ENCODE measurements at regions of chr1 and their contacts with region 1.

Region 1: DNA sequence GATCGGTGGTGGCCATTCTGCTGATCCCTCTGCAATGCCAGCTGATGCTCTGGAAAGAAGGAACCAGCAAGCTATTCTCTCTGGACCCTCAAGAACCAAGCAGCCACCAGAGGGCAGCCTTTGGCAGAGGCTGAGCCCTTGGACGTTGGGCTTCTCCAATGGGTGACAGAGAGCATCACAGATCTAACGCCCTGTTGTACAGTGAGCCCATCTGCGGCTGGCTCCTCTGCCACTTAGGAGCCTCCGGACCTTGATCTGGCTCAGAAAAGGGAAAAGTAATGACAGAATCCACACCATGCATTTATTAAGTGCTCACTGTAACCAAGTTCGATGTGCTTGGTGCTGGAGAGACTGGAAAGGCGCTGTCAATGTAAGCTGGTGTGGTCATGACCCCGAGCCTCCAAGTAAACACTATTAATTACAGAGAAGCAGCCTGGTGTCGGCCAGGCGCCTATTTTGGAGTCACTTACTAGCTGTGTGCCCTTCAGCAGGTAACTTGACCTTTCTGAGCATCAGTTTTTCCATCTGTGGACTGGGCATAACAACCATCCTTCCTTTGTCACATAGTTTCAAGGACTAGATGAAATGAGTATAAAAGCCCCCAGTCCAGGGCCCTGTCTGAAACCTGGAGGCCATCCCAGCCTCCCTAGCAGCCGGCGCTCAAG is 34.9 kb downstream of the ECE1 start:
- DNase-seq: peak; percentile 55 to 85
- ATAC-seq: peak; percentile 92 to 96
- H3K4me3 ChIP-seq: no peak overlapping the region
- H3K27ac ChIP-seq: peak overlapping the region; percentile 44 to 56; a peak in 5 of 6 replicates
- H3K4me1 ChIP-seq: peaks cover 29% of the 10 kb centered on the region
- CTCF ChIP-seq: peak; percentile 74
- EP300 ChIP-seq: no peak
- POLR2A ChIP-seq: no peak
- RAD21 ChIP-seq: peak; percentile 91 to 96

Region 2: DNA sequence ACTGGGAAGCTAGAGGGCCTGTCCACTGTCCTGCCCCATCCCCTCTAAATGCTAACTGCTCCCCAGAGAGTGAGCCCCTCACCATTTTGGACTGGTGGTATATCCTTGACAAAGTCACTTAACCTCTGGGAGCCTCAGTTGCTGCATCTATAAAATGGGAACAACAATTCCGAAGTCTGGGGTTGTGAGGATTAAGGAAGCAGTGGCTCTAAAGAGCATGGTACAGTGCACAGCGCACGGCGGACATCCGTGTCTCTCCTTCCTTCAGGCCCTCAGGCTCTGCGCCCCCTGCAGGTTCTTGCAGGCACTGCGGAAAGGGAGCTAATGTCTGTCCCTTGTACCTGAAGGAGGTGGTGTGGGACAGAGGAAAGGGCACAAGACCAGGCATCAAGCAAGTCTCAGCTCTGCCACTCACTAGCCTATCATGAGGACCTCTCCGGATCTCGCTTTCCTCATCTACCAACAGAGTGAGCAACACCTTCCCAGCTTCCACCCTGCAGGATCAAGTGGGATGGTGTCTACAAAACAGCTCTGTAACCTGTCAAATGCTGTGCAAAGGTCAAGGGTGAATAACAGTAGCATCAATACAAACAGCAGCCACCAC is 14.8 kb after region 1 on chr1:
- CTCF ChIA-PET with region 1: interaction called, 163 read pairs
- POLR2A ChIA-PET with region 1: no interaction called
- DNase-seq: peak; percentile 74 to 75
- ATAC-seq: peak; percentile 65 to 78; a peak in 5 of 6 replicates
- H3K4me3 ChIP-seq: no peak overlapping the region
- H3K27ac ChIP-seq: peak overlapping the region; percentile 95; a peak in 5 of 6 replicates
- H3K4me1 ChIP-seq: peaks cover 55% of the 10 kb centered on the region
- CTCF ChIP-seq: peak; percentile 72
- EP300 ChIP-seq: no peak
- POLR2A ChIP-seq: no peak
- RAD21 ChIP-seq: peak; percentile 35 to 57; a peak in 3 of 5 replicates

Region 3: GRCh38 chr1:21293537-21294265 is 38.3 kb after region 1 on chr1:
- CTCF ChIA-PET with region 1: interaction called, 15 read pairs
- POLR2A ChIA-PET with region 1: no interaction called
- DNase-seq: no peak
- ATAC-seq: no peak
- H3K4me3 ChIP-seq: no peak overlapping the region
- H3K27ac ChIP-seq: peak overlapping the region in 1 of 2 experiments; percentile 59; a peak in 3 of 6 replicates
- H3K4me1 ChIP-seq: peaks cover 51% of the 10 kb centered on the region
- CTCF ChIP-seq: no peak
- EP300 ChIP-seq: no peak
- POLR2A ChIP-seq: no peak
- RAD21 ChIP-seq: no peak

Region 4: DNA sequence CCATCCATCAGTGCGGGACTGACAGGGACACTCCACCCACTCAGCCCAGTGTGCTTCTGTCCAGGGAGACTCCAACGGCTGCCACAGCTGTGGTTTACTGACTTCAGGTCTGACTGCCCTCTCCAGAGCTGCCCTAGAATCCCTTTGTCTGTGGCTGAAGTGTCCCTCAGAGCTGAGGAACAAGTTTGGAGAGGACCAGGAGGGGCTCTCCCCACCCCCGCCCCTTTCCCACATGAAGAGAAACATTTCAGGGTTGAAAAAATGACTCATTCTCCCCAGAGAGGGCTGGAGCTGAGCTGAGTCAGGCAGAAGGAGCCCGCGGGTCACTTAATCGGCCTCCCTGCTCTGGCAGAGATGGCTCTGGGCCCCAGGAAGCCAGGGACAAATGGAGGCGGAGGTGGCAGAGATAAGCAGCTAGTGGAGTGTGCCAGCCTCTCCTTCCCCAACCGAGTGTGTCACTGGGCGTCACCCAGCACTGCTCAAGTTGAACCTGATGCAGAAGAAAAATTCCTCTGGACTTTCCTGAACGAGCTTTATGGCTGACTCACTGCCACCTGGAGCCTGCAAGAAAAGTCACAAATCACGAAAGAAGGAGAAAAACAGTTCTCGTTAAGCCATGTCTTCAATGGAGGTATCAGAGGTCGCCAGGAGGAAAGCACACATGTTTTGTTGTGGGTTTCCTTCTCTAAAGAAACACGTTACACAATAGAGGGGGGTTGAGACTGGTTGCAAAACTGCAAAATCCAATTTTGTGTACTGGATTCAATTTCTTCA is 69.1 kb after region 1 on chr1:
- CTCF ChIA-PET with region 1: interaction called, 49 read pairs
- POLR2A ChIA-PET with region 1: interaction called, 3 read pairs
- DNase-seq: peak; percentile 75 to 77
- ATAC-seq: peak; percentile 78 to 79
- H3K4me3 ChIP-seq: 0 out of 3 replicates have a peak overlapping the region, but pooled peaks have one; percentile 12
- H3K27ac ChIP-seq: peak overlapping the region; percentile 94 to 98
- H3K4me1 ChIP-seq: peaks cover 88% of the 10 kb centered on the region
- CTCF ChIP-seq: no peak
- EP300 ChIP-seq: no peak; a peak in 2 of 5 replicates
- POLR2A ChIP-seq: no peak
- RAD21 ChIP-seq: peak in 1 of 2 experiments; percentile 22; a peak in 1 of 5 replicates

Region 5: GRCh38 chr1:21350187-21350885 is 94.9 kb after region 1 on chr1:
- CTCF ChIA-PET with region 1: interaction called, 20 read pairs
- POLR2A ChIA-PET with region 1: no interaction called
- DNase-seq: no peak
- ATAC-seq: no peak
- H3K4me3 ChIP-seq: no peak overlapping the region
- H3K27ac ChIP-seq: no peak overlapping the region
- H3K4me1 ChIP-seq: peaks cover 7% of the 10 kb centered on the region; the same call in 2 of the 3 replicates
- CTCF ChIP-seq: no peak
- EP300 ChIP-seq: no peak
- POLR2A ChIP-seq: no peak
- RAD21 ChIP-seq: no peak